Activated CD4-positive, alpha-beta memory T cell treated with anti-CD3 and anti-CD28 coated beads, Interleukin-2, amount 10 ng/mL, durations not matched to agents 7 days and 5 days (primary cell): ENCODE measurements at regions of chr4 and their contacts with region 1.

Region 1: GRCh38 chr4:2412885-2413716 is 5.3 kb downstream of the ZFYVE28 start:
- DNase-seq: peak; percentile 96
- H3K4me3 Mint-ChIP-seq: peak overlapping the region; percentile 62
- H3K27ac Mint-ChIP-seq: peak overlapping the region; percentile 98
- H3K4me1 Mint-ChIP-seq: peaks cover 79% of the 10 kb centered on the region
- H3K27me3 Mint-ChIP-seq: no peaks in the 10 kb centered on the region

Region 2: DNA sequence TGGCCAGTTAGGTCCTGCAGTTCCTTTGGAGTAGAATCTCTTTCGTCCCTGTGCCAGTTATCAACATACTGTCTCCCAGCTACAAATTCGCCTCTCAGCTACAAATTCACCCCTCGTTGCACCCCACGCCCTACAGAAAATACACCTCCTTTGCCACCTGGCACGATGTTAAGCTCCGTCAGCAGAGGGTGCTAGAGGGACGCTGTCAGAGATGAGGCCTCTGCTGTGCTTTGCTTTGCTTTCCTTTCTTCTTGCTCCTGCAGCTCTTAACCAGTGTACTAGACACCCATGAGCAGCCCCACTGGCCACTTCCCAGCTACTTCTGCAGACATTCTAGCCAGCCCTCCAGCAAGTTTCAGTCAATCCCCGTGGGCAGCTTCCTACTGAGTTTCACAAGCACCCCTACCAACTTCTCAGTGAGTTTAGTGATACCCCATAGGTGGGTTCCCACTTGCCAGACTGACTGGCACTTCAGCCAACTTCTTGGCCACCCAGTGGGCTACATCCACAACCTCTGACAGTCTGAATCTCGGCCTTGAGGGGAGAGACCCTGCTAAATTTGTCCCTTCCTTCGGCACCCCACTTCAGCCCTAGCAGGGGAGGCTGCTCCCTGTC is 193.0 kb before region 1 on chr4:
- CTCF ChIA-PET with region 1: interaction called, 12 read pairs
- POLR2A ChIA-PET with region 1: interaction called, 6 read pairs
- DNase-seq: peak; percentile 82
- H3K4me3 Mint-ChIP-seq: no peak overlapping the region
- H3K27ac Mint-ChIP-seq: no peak overlapping the region
- H3K4me1 Mint-ChIP-seq: peaks cover 16% of the 10 kb centered on the region
- H3K27me3 Mint-ChIP-seq: no peaks in the 10 kb centered on the region

Region 3: DNA sequence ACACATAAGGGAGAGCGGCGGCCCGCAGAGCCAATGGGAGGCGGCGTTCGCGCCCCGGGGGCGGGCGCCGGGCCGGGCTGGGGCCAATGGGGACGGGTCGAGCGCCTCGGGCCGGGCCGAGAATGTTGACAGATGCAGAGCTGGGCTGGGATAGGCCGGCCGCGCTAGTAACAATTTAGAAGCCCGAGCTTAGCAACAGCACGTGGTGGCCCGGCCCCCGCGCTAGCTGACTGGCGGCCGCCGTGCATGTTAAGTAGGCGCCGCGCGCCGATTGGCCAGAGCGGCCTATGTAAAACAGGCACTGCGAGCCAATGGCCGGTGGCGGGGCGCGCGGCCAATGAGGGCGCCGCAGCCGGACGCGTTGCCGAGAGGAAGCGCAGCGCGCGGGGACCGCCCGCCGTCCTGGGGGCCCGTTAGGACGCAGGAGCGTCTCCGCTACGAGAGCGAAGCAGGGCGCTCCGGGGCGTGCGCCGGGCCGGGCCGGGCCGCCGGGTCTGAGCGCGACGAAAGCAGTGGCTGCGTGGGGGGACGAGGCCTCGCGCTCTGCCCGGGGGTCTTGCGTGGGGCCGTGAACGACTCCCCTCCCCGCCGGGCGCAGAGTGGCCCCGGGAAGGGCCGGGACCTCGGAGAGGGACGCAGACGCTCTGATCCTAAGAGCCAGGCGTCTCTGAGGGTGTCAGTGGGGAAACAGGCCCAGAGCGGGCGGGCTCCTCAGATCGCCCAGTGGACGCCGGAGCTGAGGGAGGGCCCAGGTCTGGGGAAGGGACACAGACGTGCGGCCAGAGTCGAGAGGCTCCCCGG is 150.8 kb before region 1 on chr4:
- CTCF ChIA-PET with region 1: interaction called, 11 read pairs
- POLR2A ChIA-PET with region 1: interaction called, 31 read pairs
- DNase-seq: peak; percentile 99
- H3K4me3 Mint-ChIP-seq: peak overlapping the region; percentile 73
- H3K27ac Mint-ChIP-seq: peak overlapping the region; percentile 68
- H3K4me1 Mint-ChIP-seq: peaks cover 4% of the 10 kb centered on the region
- H3K27me3 Mint-ChIP-seq: no peaks in the 10 kb centered on the region

Region 4: GRCh38 chr4:2320152-2320551 is 92.9 kb before region 1 on chr4:
- CTCF ChIA-PET with region 1: no interaction called
- POLR2A ChIA-PET with region 1: no interaction called
- DNase-seq: peak; percentile 15
- H3K4me3 Mint-ChIP-seq: no peak overlapping the region
- H3K27ac Mint-ChIP-seq: no peak overlapping the region
- H3K4me1 Mint-ChIP-seq: peaks cover 3% of the 10 kb centered on the region
- H3K27me3 Mint-ChIP-seq: no peaks in the 10 kb centered on the region

Region 5: GRCh38 chr4:2366252-2367192 is 46.6 kb before region 1 on chr4:
- CTCF ChIA-PET with region 1: no interaction called
- POLR2A ChIA-PET with region 1: interaction called, 11 read pairs
- DNase-seq: no peak
- H3K4me3 Mint-ChIP-seq: no peak overlapping the region
- H3K27ac Mint-ChIP-seq: no peak overlapping the region
- H3K4me1 Mint-ChIP-seq: peaks cover 6% of the 10 kb centered on the region
- H3K27me3 Mint-ChIP-seq: no peaks in the 10 kb centered on the region

Region 6: GRCh38 chr4:2402029-2402428 is 11.1 kb before region 1 on chr4:
- CTCF ChIA-PET with region 1: interaction called, 36 read pairs
- POLR2A ChIA-PET with region 1: interaction called, 76 read pairs
- DNase-seq: peak; percentile 33
- H3K4me3 Mint-ChIP-seq: peak overlapping the region; percentile 37
- H3K27ac Mint-ChIP-seq: peak overlapping the region; percentile 51
- H3K4me1 Mint-ChIP-seq: peaks cover 53% of the 10 kb centered on the region
- H3K27me3 Mint-ChIP-seq: no peaks in the 10 kb centered on the region